Common myeloid progenitor, CD34-positive (primary cell): ENCODE measurements at regions of chr15 and their contacts with region 1.

Region 1: DNA sequence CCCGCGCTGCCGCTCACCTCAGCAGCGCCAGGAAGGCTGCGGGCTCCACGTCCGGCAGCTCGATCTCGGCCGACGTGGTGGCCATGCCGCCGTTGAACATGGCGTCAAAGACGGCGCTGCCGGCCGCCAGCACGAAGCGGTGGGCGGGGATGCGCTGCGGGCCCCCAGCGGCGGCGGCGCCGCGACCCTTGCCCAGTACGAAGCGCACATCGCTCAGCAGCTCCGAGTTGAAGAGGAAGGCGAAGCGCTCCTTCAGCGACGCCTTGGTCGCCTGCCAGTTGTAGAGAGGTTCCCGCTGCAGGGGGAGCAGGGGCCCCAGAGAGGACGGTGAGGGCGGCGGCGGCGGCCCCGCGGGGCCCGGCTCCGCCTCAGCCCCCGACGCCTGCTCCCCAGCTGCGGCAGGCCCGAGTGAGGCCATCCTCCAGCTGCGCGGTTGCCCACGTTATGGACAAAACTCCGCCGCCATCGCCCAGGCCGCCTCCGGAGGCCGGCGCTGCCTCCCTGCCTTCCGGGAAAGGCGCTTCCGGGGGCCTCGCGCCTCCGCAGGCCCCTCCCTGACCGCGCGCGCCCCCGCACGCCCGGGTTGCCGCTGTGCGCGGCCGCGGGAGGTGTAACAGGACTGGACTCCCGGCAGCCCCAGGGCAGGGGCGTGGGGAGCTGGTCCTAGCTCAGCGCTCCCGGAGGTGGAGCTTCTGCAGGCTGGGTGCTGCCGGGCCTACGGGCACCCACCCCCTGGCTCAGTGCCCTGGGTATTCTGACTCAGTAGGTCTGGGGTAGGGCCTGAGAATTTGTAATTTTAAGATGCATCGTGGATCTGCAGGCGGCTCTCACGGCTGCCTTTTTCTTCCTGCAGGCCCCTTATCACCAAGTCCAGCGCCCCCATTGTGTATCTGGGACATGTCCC is at the start of gene BTBD1:
- DNase-seq: peak; percentile 77 to 86 (median 78)
- H3K4me3 ChIP-seq: peak within 1 kb of the TSS; percentile 71 to 98 (median 91)
- H3K27ac ChIP-seq: peak within 1 kb of the TSS; percentile 64 to 86
- H3K4me1 ChIP-seq: peaks cover 28 to 53% (median 43%) of the 10 kb centered on the region in 4 experiments
- H3K27me3 ChIP-seq: no peaks in the 10 kb centered on the region

Region 2: GRCh38 chr15:83108266-83109226 is 41.6 kb after region 1 on chr15:
- CTCF ChIA-PET with region 1: interaction called, 7 read pairs
- POLR2A ChIA-PET with region 1: interaction called, 14 read pairs
- DNase-seq: peak; percentile 86 to 97 (median 95)
- H3K4me3 ChIP-seq: peak overlapping the region; percentile 28 to 80 (median 67)
- H3K27ac ChIP-seq: no peak overlapping the region
- H3K4me1 ChIP-seq: peaks cover 5 to 32% (median 29%) of the 10 kb centered on the region in 4 experiments
- H3K27me3 ChIP-seq: peaks cover 0 to 10% (median 0%) of the 10 kb centered on the region in 5 experiments